ENCODE measurements at regions of chr12 and their contacts with region 1.

Region 1: GRCh38 chr12:77925536-77926108 is 94.9 kb downstream of the NAV3 start:
- DNase-seq: peak; percentile 88
- H3K4me3 Mint-ChIP-seq: no peak overlapping the region
- H3K27ac Mint-ChIP-seq: peak overlapping the region; percentile 12
- H3K4me1 Mint-ChIP-seq: no peaks in the 10 kb centered on the region
- H3K27me3 Mint-ChIP-seq: no peaks in the 10 kb centered on the region
- CTCF ChIP-seq: peak; percentile 98

Region 2: DNA sequence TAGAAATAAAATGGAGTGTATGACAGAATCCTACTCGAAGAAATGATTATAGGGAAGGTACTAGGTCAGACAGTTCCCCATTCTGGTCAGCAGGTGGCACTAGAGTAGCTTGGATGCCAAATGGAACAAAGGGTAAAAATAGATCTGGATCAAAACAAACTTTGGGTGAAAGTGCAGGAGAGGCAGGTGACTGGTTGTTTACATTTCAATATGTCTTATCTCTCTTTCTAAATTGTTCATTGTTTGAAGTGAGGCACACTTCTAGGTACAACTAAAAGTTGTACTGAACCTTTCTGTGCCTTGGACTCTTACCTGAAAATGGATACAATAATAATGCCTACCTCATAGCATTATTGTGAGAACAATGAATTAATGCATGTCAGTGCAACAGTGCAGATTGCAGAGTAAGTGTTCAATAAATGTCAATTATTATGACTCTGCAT is 1304.0 kb before region 1 on chr12:
- CTCF ChIA-PET with region 1: interaction called, 3 read pairs
- POLR2A ChIA-PET with region 1: no interaction called
- intact Hi-C with region 1: loop called (anchors 5 kb)
- DNase-seq: peak; percentile 83
- H3K4me3 Mint-ChIP-seq: no peak overlapping the region
- H3K27ac Mint-ChIP-seq: no peak overlapping the region
- H3K4me1 Mint-ChIP-seq: peaks cover 5% of the 10 kb centered on the region
- H3K27me3 Mint-ChIP-seq: no peaks in the 10 kb centered on the region
- CTCF ChIP-seq: peak; percentile 91

Region 3: GRCh38 chr12:77152623-77153193 is 772.9 kb before region 1 on chr12:
- CTCF ChIA-PET with region 1: interaction called, 7 read pairs
- POLR2A ChIA-PET with region 1: no interaction called
- intact Hi-C with region 1: loop called (anchors 1 kb)
- DNase-seq: peak; percentile 48
- H3K4me3 Mint-ChIP-seq: no peak overlapping the region
- H3K27ac Mint-ChIP-seq: no peak overlapping the region
- H3K4me1 Mint-ChIP-seq: no peaks in the 10 kb centered on the region
- H3K27me3 Mint-ChIP-seq: no peaks in the 10 kb centered on the region
- CTCF ChIP-seq: peak; percentile 69

Region 4: DNA sequence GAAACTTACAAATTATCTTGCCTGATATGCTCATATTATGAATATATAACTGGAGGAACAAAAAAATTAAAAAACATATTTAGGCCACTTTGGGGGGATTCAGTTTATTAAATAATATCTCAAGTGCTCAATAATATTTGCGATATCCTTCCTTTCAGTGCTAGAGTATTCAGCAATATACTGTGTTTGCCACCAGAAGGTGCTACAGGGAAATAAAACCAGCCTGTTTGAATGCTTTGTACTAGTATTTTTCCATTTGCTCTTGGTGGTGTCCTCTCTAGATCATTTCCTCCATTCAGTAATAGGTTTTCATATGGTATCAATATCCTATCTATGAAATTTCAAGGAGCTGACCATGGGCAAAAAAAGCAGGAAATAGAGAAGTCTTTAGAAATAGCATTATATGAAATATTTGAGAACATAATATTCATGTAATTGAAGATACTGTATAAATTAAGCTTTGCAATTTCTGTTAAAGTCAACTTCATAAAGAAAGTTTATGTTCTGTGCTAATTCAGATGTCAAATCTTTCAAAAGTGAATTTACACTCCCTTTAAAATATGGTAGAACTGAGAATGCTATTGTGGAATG is 201.2 kb before region 1 on chr12:
- CTCF ChIA-PET with region 1: interaction called, 70 read pairs
- POLR2A ChIA-PET with region 1: interaction called, 7 read pairs
- intact Hi-C with region 1: loop called (anchors 1 kb)
- DNase-seq: peak; percentile 64
- H3K4me3 Mint-ChIP-seq: no peak overlapping the region
- H3K27ac Mint-ChIP-seq: no peak overlapping the region
- H3K4me1 Mint-ChIP-seq: no peaks in the 10 kb centered on the region
- H3K27me3 Mint-ChIP-seq: no peaks in the 10 kb centered on the region
- CTCF ChIP-seq: peak; percentile 78

Region 5: GRCh38 chr12:77907936-77908335 is 17.7 kb before region 1 on chr12:
- CTCF ChIA-PET with region 1: interaction called, 24 read pairs
- POLR2A ChIA-PET with region 1: no interaction called
- intact Hi-C with region 1: no loop called
- DNase-seq: no peak
- H3K4me3 Mint-ChIP-seq: no peak overlapping the region
- H3K27ac Mint-ChIP-seq: no peak overlapping the region
- H3K4me1 Mint-ChIP-seq: no peaks in the 10 kb centered on the region
- H3K27me3 Mint-ChIP-seq: no peaks in the 10 kb centered on the region
- CTCF ChIP-seq: no peak

Region 6: DNA sequence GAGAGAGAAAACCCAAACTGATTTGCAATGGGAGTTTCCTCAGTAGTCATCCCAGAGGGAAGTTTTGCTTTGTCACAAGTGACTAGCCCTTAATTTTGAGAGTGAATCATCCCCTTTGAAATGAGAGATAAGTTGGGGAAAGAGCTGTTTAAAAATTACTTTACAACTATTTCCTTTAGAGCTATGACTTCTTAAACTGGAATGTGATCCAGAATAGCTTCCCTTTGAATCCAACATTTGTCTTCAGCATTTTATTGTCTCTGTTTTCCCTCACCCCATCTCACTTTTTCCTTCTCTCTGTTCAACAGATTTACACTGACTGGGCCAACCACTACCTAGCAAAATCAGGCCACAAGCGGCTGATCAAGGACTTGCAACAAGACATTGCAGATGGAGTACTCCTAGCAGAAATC is 14.4 kb after region 1 on chr12:
- CTCF ChIA-PET with region 1: interaction called, 19 read pairs
- POLR2A ChIA-PET with region 1: interaction called, 3 read pairs
- intact Hi-C with region 1: no loop called
- DNase-seq: peak; percentile 72
- H3K4me3 Mint-ChIP-seq: peak overlapping the region; percentile 64
- H3K27ac Mint-ChIP-seq: peak overlapping the region; percentile 84
- H3K4me1 Mint-ChIP-seq: peaks cover 25% of the 10 kb centered on the region
- H3K27me3 Mint-ChIP-seq: no peaks in the 10 kb centered on the region
- CTCF ChIP-seq: no peak

Region 7: DNA sequence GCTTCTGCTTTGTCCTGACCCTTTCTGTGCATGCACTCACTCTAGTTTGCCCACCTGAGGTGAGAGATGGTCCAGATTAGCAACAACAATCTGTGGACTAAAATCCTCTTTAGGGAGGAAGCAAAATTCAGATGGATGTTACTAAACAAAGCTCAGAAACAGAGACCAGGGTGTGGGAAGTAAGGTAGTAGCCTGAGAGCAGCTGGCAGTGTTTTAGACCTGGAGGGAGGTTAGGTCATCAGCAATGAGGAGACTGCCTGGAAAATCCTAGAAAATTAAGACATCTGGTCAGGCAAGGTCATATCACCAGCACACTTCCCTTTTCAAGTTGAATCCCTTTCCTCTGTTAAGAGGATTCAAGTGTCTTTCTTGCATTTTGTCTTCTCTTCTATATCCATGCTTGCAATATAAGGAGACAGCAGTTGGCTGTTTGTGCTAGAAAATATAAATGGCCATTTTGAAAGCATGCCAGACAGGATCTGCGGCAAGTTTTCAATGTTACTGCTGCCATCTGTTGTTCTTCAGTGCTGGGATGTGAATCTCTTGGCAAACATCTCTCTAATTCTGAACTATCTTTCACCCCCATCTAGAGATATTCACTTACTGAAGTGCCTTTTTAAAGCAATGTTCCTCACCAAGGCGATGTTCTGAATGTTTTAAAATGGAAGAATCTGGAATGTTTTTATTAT is 171.4 kb after region 1 on chr12:
- CTCF ChIA-PET with region 1: no interaction called
- POLR2A ChIA-PET with region 1: no interaction called
- intact Hi-C with region 1: no loop called
- DNase-seq: no peak
- H3K4me3 Mint-ChIP-seq: no peak overlapping the region
- H3K27ac Mint-ChIP-seq: no peak overlapping the region
- H3K4me1 Mint-ChIP-seq: peaks cover 5% of the 10 kb centered on the region
- H3K27me3 Mint-ChIP-seq: no peaks in the 10 kb centered on the region
- CTCF ChIP-seq: no peak

Region 8: DNA sequence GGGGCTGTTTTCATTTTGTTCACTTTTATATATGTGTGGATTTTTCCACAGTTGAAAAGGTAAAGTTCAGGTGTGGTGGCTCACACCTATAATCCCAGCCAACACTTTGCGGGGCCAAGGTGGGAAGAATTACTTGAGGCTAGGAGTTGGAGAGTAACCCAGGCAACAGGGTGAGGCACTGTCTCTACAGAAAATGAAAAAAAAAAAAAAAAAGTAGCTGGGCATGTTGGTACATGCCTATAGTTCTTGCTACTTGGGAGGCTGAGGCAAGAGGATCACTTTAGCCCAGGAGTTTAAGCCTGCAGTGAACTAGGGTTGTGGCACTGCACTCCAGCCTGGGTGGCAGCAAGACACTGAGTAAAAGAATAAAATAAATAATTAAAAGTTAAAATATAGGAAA is 231.6 kb after region 1 on chr12:
- CTCF ChIA-PET with region 1: no interaction called
- POLR2A ChIA-PET with region 1: no interaction called
- intact Hi-C with region 1: no loop called
- DNase-seq: peak; percentile 25
- H3K4me3 Mint-ChIP-seq: no peak overlapping the region
- H3K27ac Mint-ChIP-seq: peak overlapping the region; percentile 92
- H3K4me1 Mint-ChIP-seq: peaks cover 12% of the 10 kb centered on the region
- H3K27me3 Mint-ChIP-seq: no peaks in the 10 kb centered on the region
- CTCF ChIP-seq: no peak

Measured in MCF 10A (cell line).